ENCODE measurements at regions of chr12 and their contacts with region 1.

Region 1: GRCh38 chr12:110449799-110450497 is at the start of gene ARPC3:
- DNase-seq: peak; percentile 90 to 98 (median 94)
- ATAC-seq: peak; percentile 95
- H3K4me3 ChIP-seq: peak within 1 kb of the TSS; percentile 84
- H3K4me3 Mint-ChIP-seq: peak within 1 kb of the TSS; percentile 100
- H3K27ac ChIP-seq: peak within 1 kb of the TSS; percentile 92 to 94
- H3K27ac Mint-ChIP-seq: peak within 1 kb of the TSS; percentile 96
- H3K4me1 ChIP-seq: peaks cover 41% of the 10 kb centered on the region
- H3K4me1 Mint-ChIP-seq: peaks cover 47% of the 10 kb centered on the region
- H3K27me3 ChIP-seq: no peaks in the 10 kb centered on the region
- H3K27me3 Mint-ChIP-seq: no peaks in the 10 kb centered on the region
- CTCF ChIP-seq: peak; percentile 81
- total RNA-seq, gene ARPC3: 120 to 124 TPM

Region 2: GRCh38 chr12:110468212-110469048 is 18.5 kb after region 1 on chr12 and contains the starts of genes FAM216A and GPN3:
- CTCF ChIA-PET with region 1: interaction called, 98 read pairs
- POLR2A ChIA-PET with region 1: interaction called, 117 read pairs
- intact Hi-C with region 1: loop called (anchors 1 kb)
- DNase-seq: peak; percentile 88 to 97 (median 92)
- ATAC-seq: peak; percentile 89
- H3K4me3 ChIP-seq: peak within 1 kb of the TSS; percentile 72
- H3K4me3 Mint-ChIP-seq: peak within 1 kb of the TSS; percentile 97
- H3K27ac ChIP-seq: peak within 1 kb of the TSS; percentile 66 to 92
- H3K27ac Mint-ChIP-seq: peak within 1 kb of the TSS; percentile 88
- H3K4me1 ChIP-seq: peaks cover 29% of the 10 kb centered on the region
- H3K4me1 Mint-ChIP-seq: peaks cover 33% of the 10 kb centered on the region
- H3K27me3 ChIP-seq: no peaks in the 10 kb centered on the region
- H3K27me3 Mint-ChIP-seq: no peaks in the 10 kb centered on the region
- CTCF ChIP-seq: no peak
- total RNA-seq, gene FAM216A: 5.5 to 7.4 TPM
- total RNA-seq, gene GPN3: 2.7 to 2.8 TPM

Region 3: DNA sequence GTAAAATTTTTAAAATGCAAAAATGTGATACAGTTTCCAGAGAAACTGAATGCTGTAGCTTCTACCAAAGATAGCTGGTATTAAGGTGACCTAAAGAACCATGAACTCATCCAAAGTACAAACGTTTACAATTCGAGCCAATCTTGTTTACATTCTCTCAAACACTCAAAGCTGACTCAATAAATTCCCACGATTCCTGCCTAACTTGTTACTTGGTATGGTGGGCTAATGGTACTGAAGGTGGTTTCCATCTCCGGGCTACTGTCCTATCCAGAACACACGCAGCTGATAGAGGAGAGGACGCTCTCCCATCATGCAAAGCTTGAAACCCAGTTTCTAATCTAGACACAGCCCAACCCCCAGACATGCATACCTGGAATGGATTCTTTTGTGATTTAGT is 83.7 kb after region 1 on chr12:
- CTCF ChIA-PET with region 1: interaction called, 10 read pairs
- POLR2A ChIA-PET with region 1: no interaction called
- intact Hi-C with region 1: no loop called
- DNase-seq: no peak
- ATAC-seq: no peak
- H3K4me3 ChIP-seq: no peak overlapping the region
- H3K4me3 Mint-ChIP-seq: no peak overlapping the region
- H3K27ac ChIP-seq: no peak overlapping the region
- H3K27ac Mint-ChIP-seq: no peak overlapping the region
- H3K4me1 ChIP-seq: no peaks in the 10 kb centered on the region
- H3K4me1 Mint-ChIP-seq: peaks cover 5% of the 10 kb centered on the region
- H3K27me3 ChIP-seq: no peaks in the 10 kb centered on the region
- H3K27me3 Mint-ChIP-seq: no peaks in the 10 kb centered on the region
- CTCF ChIP-seq: no peak

Region 4: DNA sequence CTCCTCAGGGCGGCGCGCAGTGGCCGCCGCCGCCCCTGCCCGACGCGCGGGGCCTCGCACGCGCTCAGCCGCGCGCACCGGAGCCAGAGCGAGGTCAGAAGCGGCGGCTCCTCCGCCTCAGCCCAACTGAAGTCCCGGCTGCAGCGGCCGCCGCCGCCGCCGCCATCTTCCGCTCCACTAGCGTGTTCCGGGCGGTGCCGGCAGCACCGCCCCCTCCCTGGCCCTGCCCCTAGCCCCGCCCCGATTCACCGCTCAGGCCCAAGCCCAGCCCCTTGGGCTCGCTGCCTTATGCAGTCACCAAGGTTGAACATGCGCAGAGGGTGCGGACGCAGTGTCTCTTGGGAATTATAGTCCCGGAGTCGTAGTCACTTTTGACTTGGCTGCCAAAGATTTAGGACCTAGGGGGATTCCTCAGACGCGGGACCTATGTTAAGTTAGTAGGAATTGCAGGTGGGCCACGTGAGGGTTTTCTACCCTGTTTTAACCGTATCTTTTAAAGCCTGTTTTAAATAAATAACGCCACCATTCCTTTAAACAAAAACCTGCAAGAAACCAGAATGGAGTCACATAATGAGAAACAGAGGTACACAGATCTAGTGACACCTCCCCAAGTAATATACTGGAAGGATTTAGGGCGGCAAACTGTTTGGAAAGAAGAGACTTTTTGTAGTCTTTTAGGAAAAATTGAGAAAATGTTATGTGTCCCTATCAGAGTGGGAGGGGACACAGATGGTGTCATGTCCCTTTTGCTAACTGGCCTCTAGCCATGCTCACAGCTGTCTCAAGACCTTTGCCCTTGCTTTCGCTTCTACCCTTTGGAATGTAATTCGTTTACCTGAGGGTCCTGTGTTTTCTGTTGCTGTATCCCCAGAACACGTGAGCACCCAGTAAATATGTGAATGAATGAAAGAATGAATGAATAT is 133.4 kb after region 1 on chr12 and contains the start of gene PPTC7:
- CTCF ChIA-PET with region 1: interaction called, 11 read pairs
- POLR2A ChIA-PET with region 1: interaction called, 9 read pairs
- intact Hi-C with region 1: no loop called
- DNase-seq: peak; percentile 96 to 98 (median 97)
- ATAC-seq: peak; percentile 92
- H3K4me3 ChIP-seq: peak within 1 kb of the TSS; percentile 95
- H3K4me3 Mint-ChIP-seq: peak within 1 kb of the TSS; percentile 97
- H3K27ac ChIP-seq: peak within 1 kb of the TSS; percentile 64 to 91
- H3K27ac Mint-ChIP-seq: peak within 1 kb of the TSS; percentile 96
- H3K4me1 ChIP-seq: peaks cover 67% of the 10 kb centered on the region
- H3K4me1 Mint-ChIP-seq: peaks cover 68% of the 10 kb centered on the region
- H3K27me3 ChIP-seq: no peaks in the 10 kb centered on the region
- H3K27me3 Mint-ChIP-seq: no peaks in the 10 kb centered on the region
- CTCF ChIP-seq: no peak
- total RNA-seq, gene PPTC7: 53.8 to 54.8 TPM

Region 5: DNA sequence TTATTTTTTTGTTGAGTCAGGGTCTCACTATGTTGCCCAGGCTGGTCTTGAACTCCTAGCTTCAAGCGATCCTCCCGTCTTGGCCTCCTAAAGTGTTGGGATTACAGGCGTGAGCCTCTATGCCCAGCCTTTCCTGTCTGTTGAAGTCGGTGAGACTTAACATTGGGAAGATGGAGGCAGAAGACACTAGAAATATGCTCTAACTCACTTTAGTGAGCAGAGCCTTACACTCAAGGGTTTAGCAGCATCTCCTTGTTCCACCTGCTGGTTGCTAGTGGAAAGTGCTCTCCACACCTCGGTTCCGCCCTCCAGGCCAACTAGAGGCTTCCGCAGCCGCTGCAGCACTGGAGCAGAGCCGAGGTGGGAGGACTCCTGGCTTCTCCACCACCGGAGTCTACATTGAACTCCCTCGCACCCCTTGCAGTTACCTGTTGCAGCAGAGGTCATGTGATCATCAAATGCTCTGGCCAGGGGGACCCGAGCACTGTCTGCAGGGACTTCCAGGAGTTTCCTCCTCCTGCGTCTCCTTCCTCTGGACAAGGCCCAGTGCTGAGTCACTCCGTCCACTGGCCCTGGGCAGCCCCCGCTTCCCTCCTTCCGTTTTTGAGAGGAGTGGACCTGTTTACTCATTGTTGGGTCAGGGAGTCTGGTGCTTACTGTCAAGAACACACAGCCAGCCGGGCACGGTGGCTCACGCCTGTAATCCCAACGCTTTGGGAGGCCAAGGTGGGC is 248.4 kb after region 1 on chr12:
- CTCF ChIA-PET with region 1: interaction called, 4 read pairs
- POLR2A ChIA-PET with region 1: no interaction called
- intact Hi-C with region 1: loop called (anchors 1 to 5 kb)
- DNase-seq: peak; percentile 66 to 90 (median 73)
- ATAC-seq: peak; percentile 100
- H3K4me3 ChIP-seq: no peak overlapping the region
- H3K4me3 Mint-ChIP-seq: no peak overlapping the region
- H3K27ac ChIP-seq: no peak overlapping the region
- H3K27ac Mint-ChIP-seq: peak overlapping the region; percentile 21
- H3K4me1 ChIP-seq: peaks cover 10% of the 10 kb centered on the region
- H3K4me1 Mint-ChIP-seq: peaks cover 17% of the 10 kb centered on the region
- H3K27me3 ChIP-seq: no peaks in the 10 kb centered on the region
- H3K27me3 Mint-ChIP-seq: no peaks in the 10 kb centered on the region
- CTCF ChIP-seq: peak; percentile 86

Measured in CD4-positive, alpha-beta T cell (primary cell).